Common myeloid progenitor, CD34-positive (primary cell): ENCODE measurements at regions of chr7 and their contacts with region 1.

Region 1: DNA sequence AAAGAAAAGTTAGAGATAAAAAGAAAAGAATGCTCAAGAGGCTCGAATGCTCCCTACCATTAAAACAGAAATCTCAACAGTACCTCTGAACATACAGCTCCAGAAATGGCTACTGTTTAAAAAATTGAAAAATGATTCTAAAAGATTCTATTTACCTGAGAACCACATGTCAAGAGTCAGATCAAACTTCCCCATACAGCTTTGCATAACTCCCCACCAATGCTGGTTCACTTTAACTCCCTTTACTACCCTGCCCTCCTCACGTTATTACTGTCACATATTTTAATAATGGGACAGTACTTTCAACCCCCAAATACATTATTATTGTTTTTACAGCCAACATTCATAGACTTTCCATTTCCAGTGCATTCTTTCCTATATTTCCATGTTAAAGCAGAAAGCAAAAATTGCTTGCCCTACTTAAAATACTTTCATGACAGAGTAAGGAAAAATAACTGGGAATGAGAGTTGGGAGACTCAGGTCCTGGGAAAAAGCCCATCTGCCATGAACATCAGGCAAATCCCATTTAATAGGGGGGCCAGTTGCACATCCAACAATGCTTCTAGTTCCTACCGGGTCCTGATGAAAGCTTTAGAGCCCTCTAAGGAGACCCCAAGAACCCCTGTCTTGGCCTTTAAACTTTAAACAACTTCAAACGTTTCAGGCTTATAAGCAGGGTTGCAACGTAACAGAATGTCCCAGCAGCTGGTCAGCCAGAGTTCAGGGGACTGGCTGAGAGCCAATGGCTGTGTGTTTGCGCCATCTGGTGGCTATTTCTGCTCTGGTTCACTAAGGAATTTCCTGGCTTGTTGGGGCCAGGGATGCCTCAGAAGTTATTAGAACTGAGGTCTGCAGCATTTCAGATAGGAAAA is 247.4 kb downstream of the ELMO1 start:
- DNase-seq: peak; percentile 56 to 72 (median 67)
- H3K4me3 ChIP-seq: no peak overlapping the region
- H3K27ac ChIP-seq: no peak overlapping the region
- H3K4me1 ChIP-seq: peaks cover 0 to 26% (median 11%) of the 10 kb centered on the region in 4 experiments
- H3K27me3 ChIP-seq: no peaks in the 10 kb centered on the region

Region 2: GRCh38 chr7:37181550-37181932 is 19.7 kb before region 1 on chr7:
- CTCF ChIA-PET with region 1: interaction called, 30 read pairs
- POLR2A ChIA-PET with region 1: no interaction called
- DNase-seq: no peak
- H3K4me3 ChIP-seq: no peak overlapping the region
- H3K27ac ChIP-seq: no peak overlapping the region
- H3K4me1 ChIP-seq: peaks cover 0 to 12% (median 4%) of the 10 kb centered on the region in 4 experiments
- H3K27me3 ChIP-seq: no peaks in the 10 kb centered on the region

Region 3: DNA sequence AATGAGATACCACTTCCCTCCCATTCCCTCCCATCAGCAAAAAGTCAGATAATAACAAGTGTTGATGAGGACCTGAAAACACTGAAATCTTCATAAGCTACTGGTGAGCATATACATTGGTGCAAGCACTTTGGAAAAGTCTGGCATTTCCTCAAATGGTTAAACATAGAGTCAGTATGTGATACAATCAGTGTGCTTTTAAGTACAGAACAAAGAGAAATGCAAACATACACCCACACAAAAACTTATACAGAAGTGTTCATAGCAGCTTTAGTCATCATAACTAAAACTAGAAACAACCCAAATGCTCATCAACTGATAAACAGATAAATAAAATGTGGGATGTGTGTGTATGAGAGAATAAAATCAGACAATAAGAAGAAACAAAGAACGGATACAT is 14.5 kb before region 1 on chr7:
- CTCF ChIA-PET with region 1: interaction called, 30 read pairs
- POLR2A ChIA-PET with region 1: no interaction called
- DNase-seq: no peak
- H3K4me3 ChIP-seq: no peak overlapping the region
- H3K27ac ChIP-seq: no peak overlapping the region
- H3K4me1 ChIP-seq: peaks cover 0 to 12% (median 4%) of the 10 kb centered on the region in 4 experiments
- H3K27me3 ChIP-seq: no peaks in the 10 kb centered on the region

Region 4: GRCh38 chr7:37216156-37216852 is 15.1 kb after region 1 on chr7:
- CTCF ChIA-PET with region 1: interaction called, 12 read pairs
- POLR2A ChIA-PET with region 1: no interaction called
- DNase-seq: peak in 2 of 3 donors; percentile 34 to 51
- H3K4me3 ChIP-seq: no peak overlapping the region
- H3K27ac ChIP-seq: no peak overlapping the region
- H3K4me1 ChIP-seq: peaks cover 5 to 65% (median 49%) of the 10 kb centered on the region in 4 experiments
- H3K27me3 ChIP-seq: no peaks in the 10 kb centered on the region